ENCODE measurements at regions of chr3 and their contacts with region 1.

Region 1: DNA sequence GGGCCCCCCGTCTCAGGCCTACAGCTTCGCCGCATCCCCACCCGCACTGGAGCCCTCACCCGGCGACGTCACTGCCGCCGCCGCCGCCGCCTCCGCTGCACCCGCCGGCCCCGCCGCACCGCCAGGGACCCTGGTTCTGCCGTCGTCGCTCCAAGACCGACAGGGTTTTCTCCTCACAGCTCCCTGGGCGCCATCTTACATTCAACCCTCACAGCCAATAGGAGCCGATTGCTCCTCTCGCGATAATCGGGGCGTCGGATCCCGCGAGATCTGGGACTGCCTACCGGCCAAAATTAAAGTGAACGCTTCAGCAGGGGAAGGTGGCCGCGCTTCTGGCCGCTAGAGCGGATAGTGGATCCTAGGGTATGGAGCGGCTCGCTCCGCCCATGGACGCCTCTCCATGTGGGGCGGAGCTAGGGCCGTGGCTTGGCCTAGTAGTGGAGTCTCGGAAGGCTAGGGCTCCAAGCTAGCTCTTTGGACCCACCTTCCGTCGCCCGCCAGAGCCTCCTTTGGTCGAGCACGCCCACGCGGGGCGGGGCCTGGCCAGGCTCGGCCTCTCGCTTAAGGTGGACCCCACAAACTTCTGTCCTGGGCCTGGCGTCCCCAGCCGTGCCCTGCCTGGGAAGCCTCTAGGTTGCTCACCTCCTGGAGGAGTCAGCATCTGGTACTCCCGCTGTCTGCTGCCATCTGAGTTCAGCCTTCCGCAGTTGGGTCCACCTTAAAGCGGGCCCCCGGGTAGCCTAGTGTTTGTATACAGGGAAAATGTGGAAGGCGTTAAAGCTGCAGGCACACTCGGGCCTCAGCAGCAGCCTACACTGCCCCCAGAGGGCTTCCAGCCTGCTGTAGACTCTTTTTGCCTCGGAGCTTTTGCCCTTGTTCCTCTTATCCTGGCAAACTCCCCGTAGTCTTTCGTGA is at the start of gene QRICH1:
- DNase-seq: peak; percentile 99
- ATAC-seq: peak; percentile 87
- H3K4me3 Mint-ChIP-seq: peak within 1 kb of the TSS; percentile 89
- H3K27ac Mint-ChIP-seq: peak within 1 kb of the TSS; percentile 96
- H3K4me1 Mint-ChIP-seq: peaks cover 39% of the 10 kb centered on the region
- H3K27me3 Mint-ChIP-seq: no peaks in the 10 kb centered on the region
- total RNA-seq, gene QRICH1: 142 to 149 TPM

Region 2: GRCh38 chr3:48989796-48990635 is 104.1 kb before region 1 on chr3 and contains the start of gene P4HTM:
- CTCF ChIA-PET with region 1: interaction called, 20 read pairs
- DNase-seq: peak; percentile 91
- ATAC-seq: peak; percentile 81
- H3K4me3 Mint-ChIP-seq: peak within 1 kb of the TSS; percentile 97
- H3K27ac Mint-ChIP-seq: peak within 1 kb of the TSS; percentile 93
- H3K4me1 Mint-ChIP-seq: peaks cover 50% of the 10 kb centered on the region
- H3K27me3 Mint-ChIP-seq: no peaks in the 10 kb centered on the region
- total RNA-seq, gene P4HTM: 44.5 to 50.6 TPM

Region 3: GRCh38 chr3:49007068-49007770 is 86.9 kb before region 1 on chr3 and contains the start of gene WDR6:
- CTCF ChIA-PET with region 1: interaction called, 15 read pairs
- DNase-seq: peak; percentile 99
- ATAC-seq: peak; percentile 91
- H3K4me3 Mint-ChIP-seq: peak within 1 kb of the TSS; percentile 87
- H3K27ac Mint-ChIP-seq: peak within 1 kb of the TSS; percentile 95
- H3K4me1 Mint-ChIP-seq: peaks cover 23% of the 10 kb centered on the region
- H3K27me3 Mint-ChIP-seq: no peaks in the 10 kb centered on the region
- total RNA-seq, gene WDR6: 130 to 154 TPM

Region 4: GRCh38 chr3:49021813-49022687 is 72.1 kb before region 1 on chr3 and contains the start of gene NDUFAF3:
- CTCF ChIA-PET with region 1: interaction called, 12 read pairs
- DNase-seq: peak; percentile 95
- ATAC-seq: peak; percentile 72
- H3K4me3 Mint-ChIP-seq: peak within 1 kb of the TSS; percentile 90
- H3K27ac Mint-ChIP-seq: peak within 1 kb of the TSS; percentile 98
- H3K4me1 Mint-ChIP-seq: peaks cover 61% of the 10 kb centered on the region
- H3K27me3 Mint-ChIP-seq: no peaks in the 10 kb centered on the region
- total RNA-seq, gene NDUFAF3: 94.3 to 101 TPM

Region 5: GRCh38 chr3:49104483-49105291 is 10.6 kb after region 1 on chr3 and contains the start of gene QARS1:
- CTCF ChIA-PET with region 1: interaction called, 44 read pairs
- DNase-seq: peak; percentile 95
- ATAC-seq: peak; percentile 99
- H3K4me3 Mint-ChIP-seq: peak within 1 kb of the TSS; percentile 98
- H3K27ac Mint-ChIP-seq: peak within 1 kb of the TSS; percentile 97
- H3K4me1 Mint-ChIP-seq: peaks cover 31% of the 10 kb centered on the region
- H3K27me3 Mint-ChIP-seq: no peaks in the 10 kb centered on the region
- total RNA-seq, gene QARS1: 234 to 245 TPM

Region 6: DNA sequence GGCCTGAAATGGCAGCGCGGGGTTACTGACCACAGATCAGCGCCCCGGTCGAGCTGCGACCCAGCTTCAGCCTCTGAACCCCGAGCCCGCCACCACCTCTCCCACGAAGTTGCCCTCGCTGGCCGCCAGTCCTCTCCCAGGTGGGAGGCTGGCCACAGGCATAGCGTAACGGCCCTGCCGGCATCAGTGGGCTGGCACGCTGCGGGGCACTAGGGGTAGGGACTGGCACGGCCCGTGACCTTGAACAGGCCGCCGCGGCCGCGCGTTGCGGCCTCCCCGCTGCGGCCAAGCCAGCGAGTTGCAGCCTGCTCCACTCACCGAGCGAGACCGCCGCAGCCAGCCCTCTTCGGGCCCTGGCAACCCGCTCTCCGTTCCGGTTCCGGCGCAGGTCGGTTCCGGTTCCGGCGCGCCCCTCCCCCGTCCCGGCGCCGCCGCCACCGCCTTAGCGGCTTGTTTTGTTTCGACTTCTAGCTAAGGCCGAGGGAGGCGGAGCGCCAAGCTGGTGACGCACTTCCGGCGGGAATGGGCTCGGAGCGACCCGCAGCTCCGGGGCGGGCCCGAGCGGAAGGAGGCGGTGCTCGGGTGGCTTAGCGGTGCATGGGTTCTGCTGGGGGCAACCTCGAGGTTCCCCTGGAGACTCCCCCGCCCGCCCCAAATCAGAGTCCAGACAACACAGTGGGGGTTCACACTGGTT is 26.5 kb after region 1 on chr3 and contains the start of gene USP19:
- CTCF ChIA-PET with region 1: interaction called, 25 read pairs
- DNase-seq: peak; percentile 95
- ATAC-seq: peak; percentile 94
- H3K4me3 Mint-ChIP-seq: peak within 1 kb of the TSS; percentile 91
- H3K27ac Mint-ChIP-seq: peak within 1 kb of the TSS; percentile 89
- H3K4me1 Mint-ChIP-seq: peaks cover 23% of the 10 kb centered on the region
- H3K27me3 Mint-ChIP-seq: no peaks in the 10 kb centered on the region
- total RNA-seq, gene USP19: 58.3 to 68.6 TPM

Region 7: DNA sequence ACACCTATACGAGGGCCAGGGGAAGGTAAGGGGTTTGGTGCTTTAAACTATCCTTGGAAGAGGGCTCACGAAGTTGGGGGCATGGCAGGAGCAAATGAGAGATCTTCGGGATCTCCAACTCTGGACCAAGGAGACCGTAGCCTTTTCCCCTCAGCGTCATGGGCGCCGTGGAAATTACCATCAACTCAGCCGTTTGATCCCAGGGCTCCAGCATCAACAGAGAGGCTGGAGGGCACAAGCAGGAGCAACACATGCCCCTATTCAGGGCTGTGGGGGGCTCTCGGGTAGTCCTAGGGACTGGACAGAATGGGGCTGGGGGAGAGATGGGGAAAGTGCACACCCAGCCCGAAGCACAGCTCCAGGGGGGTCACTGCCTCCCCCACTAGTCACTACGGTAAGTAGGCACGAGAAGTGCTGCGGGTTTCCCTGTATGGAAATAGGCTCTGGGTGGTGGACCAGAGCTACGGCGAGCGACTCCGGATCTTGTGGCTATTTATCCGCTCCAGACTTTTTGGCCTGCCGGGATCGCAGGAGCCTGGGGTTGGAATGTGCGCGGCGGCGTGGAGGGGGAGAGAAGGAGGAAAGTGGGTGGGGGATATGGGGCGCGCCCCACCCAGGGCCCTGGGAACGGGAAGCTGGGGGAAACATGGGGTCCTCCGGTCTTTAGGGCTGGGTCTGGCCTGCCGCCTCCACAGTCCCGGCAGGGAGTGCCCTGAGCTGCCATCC is 39.3 kb after region 1 on chr3:
- CTCF ChIA-PET with region 1: no interaction called
- DNase-seq: no peak
- ATAC-seq: no peak
- H3K4me3 Mint-ChIP-seq: no peak overlapping the region
- H3K27ac Mint-ChIP-seq: no peak overlapping the region
- H3K4me1 Mint-ChIP-seq: no peaks in the 10 kb centered on the region
- H3K27me3 Mint-ChIP-seq: peaks cover 3% of the 10 kb centered on the region

Region 8: DNA sequence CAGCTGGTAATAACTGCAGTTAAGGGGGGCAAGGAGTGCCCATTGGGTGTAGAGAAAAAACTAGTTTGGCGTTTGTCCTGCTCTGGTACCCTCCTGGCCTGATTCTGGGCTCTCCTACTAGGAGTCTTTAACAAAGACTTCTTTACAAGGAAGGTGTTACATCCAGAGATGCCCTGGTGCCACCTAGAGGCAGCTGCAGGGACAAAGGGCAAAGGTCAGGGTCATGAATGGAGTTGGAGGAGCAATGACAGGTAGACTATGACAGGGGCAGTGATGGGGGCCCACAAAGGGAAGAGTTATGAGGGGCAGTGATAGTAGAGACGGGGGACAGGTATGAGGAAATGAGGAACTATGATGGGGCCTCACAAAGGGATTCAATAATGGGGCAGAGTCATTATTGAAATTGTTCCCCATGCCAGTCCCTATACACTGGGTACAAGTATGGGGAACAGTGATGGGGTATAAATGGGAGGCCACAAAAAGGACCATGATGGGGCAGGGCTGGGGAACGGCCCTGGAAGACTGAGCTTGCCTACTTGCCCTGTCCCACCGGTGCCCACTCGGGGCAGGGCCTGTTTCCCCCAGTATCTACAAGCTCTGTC is 64.1 kb after region 1 on chr3:
- CTCF ChIA-PET with region 1: interaction called, 12 read pairs
- DNase-seq: peak; percentile 82
- ATAC-seq: peak; percentile 80
- H3K4me3 Mint-ChIP-seq: no peak overlapping the region
- H3K27ac Mint-ChIP-seq: no peak overlapping the region
- H3K4me1 Mint-ChIP-seq: peaks cover 20% of the 10 kb centered on the region
- H3K27me3 Mint-ChIP-seq: no peaks in the 10 kb centered on the region